Uterus (tissue), 4 donors: ENCODE measurements at regions of chr16 and their contacts with region 1.

Region 1: GRCh38 chr16:75110637-75111513 is 5.7 kb downstream of the LDHD start:
- DNase-seq: peak; percentile 93
- H3K4me3 ChIP-seq: peak overlapping the region in 1 of 2 donors; percentile 13
- H3K27ac ChIP-seq: peak overlapping the region; percentile 81 to 82
- H3K4me1 ChIP-seq: peaks cover 13 to 18% of the 10 kb centered on the region in 2 donors
- H3K27me3 ChIP-seq: no peaks in the 10 kb centered on the region
- CTCF ChIP-seq: peak; percentile 92 to 97 (median 94)
- POLR2A ChIP-seq: peak in 1 of 2 donors; percentile 29

Region 2: DNA sequence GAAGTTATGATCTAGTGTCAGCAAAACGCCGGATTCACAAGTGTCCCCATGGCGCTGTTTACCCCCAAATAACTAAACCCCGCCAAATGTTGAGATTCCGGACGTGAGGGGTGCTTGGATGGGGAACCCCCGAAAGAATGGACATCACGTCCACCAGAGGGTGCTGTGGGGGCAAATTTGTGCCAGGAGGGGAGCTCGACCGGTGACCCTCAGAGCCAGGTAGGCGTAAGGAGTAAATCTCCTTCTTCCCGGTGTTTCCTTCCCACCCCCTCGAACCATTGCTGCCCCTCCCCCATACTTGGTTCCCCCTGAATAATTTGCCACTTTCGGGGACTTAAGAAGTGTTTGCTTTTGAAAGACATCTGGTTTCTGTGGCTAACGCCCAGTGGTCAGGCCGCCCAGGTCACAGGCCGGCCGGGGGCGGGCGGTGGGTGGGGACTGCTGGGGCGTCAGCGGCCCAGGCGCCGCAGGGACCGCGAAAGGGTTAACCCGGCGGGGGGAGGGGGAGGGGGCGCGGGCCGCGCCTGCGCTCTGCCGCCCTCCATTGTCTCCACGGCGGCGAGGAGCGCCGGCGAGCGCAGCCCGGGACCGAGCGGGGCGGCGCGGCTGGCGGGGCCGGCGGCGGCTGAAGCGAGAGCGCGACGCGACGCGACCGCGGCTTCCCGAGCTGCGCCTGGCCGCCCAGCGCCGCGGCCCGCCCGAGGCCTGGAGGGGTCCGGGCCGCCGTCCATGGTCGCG is 112.2 kb before region 1 on chr16 and contains the start of gene ZNRF1:
- intact Hi-C with region 1: loop called (anchors 2 kb)
- DNase-seq: peak; percentile 85 to 90
- H3K4me3 ChIP-seq: peak within 1 kb of the TSS; percentile 73 to 98
- H3K27ac ChIP-seq: peak within 1 kb of the TSS; percentile 74 to 89
- H3K4me1 ChIP-seq: no peaks in the 10 kb centered on the region
- H3K27me3 ChIP-seq: no peaks in the 10 kb centered on the region
- CTCF ChIP-seq: peak; percentile 72 to 90 (median 82)
- POLR2A ChIP-seq: peak; percentile 30 to 78
- total RNA-seq, gene ZNRF1: 14.1 to 37.4 (median 19.4) TPM